Heart left ventricle (tissue), 16 donors: ENCODE measurements at regions of chr12 and their contacts with region 1.

Region 1: DNA sequence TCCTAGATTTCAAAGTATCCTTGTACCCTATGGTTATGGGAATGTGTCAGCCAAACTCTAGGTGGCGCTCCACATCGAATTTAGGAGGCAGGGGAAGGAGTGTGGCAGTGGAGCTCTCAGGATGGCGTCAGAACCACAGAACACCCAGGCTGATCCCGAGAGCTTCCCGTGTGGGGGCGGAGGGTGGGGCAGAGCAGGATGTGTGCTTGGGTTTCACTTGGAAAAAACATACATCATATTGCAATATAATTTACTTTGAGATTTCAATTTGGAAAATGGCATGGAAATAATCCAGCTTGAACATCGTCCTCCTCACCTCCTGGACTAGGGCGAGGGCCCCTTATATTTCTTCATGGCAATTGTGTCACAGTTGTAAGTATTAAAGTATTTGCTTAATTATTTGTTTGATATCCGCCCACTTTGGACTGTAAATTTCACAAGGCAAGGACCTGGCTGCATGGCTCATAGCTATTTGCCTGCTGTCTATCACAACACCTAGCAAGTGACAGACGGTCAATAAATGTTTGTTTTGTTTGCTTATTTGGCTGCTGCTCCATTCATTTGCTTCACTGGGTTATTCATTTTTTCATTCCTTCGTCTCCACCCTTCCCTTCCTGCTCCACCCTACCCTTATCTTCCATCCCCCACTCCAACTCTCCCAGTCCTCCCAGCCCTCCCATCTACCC is 221.5 kb upstream of the HMGA2 start:
- DNase-seq: peak; percentile 73 to 86 (median 80)
- ATAC-seq: peak; percentile 88 to 98 (median 96)
- H3K4me3 ChIP-seq: peak overlapping the region in 9 of 12 donors; percentile 18 to 51 (median 34)
- H3K27ac ChIP-seq: peak overlapping the region in 10 of 12 donors; percentile 6 to 65 (median 49)
- H3K4me1 ChIP-seq: peaks cover 0 to 25% (median 16%) of the 10 kb centered on the region in 12 donors
- H3K27me3 ChIP-seq: peaks cover 0 to 14% (median 3%) of the 10 kb centered on the region in 9 donors
- CTCF ChIP-seq: peak; percentile 60 to 85 (median 72)
- POLR2A ChIP-seq: no peak

Region 2: DNA sequence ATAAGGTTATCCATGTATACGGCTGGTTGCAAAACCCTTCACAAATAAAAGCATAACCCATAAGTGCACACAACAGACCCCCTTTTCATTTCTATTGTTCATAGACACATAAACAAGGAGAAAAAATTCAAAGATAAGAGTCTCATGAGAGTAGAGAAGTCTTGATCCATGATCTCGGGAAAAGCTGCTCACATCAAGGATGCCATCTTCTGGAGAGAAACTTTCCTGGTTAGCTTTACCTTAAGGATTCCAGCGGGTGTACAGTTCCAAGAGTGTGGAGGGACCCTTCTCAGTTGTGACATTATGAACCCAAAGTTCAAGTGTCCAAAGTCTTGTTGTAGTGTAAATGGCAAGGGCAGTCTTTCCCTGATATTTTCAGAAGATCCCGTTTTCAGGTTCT is 383.3 kb after region 1 on chr12:
- intact Hi-C with region 1: loop called in 6 of 10 experiments (anchors 1 to 10 kb)
- DNase-seq: no peak
- ATAC-seq: no peak
- H3K4me3 ChIP-seq: no peak overlapping the region
- H3K27ac ChIP-seq: no peak overlapping the region
- H3K4me1 ChIP-seq: no peaks in the 10 kb centered on the region
- H3K27me3 ChIP-seq: peaks cover 0 to 3% (median 0%) of the 10 kb centered on the region in 9 donors
- CTCF ChIP-seq: peak in 1 of 12 donors; percentile 8
- POLR2A ChIP-seq: no peak